ENCODE measurements at regions of chr14 and their contacts with region 1.

Region 1: DNA sequence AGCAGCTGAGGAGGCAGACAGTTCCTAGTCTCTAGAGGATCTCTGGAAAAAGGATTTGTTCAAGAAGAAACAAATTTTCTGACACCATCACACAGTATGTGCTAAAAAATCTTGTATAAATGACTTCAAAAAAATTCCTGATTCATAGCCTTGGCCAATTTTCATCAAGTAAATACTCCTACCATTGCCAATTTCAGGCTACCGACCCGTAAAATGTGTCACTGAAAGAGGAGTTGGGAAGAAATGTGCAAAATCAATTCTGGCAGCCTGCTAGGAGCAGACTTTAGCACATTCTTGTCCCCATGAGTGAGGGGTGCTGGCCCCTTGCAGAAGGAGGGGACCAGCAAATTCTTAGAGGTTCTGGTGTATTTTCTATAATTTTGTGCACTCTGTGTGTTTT is 109.4 kb downstream of the TMEM30B start:
- DNase-seq: no peak
- ATAC-seq: no peak
- H3K4me3 ChIP-seq: no peak overlapping the region
- H3K27ac ChIP-seq: peak overlapping the region in 1 of 2 donors; percentile 57
- H3K4me1 ChIP-seq: peaks cover 0 to 3% of the 10 kb centered on the region in 2 donors
- H3K27me3 ChIP-seq: no peaks in the 10 kb centered on the region

Region 2: GRCh38 chr14:60980811-60981632 is 190.7 kb before region 1 on chr14 and contains the starts of genes SLC38A6 and TRMT5:
- intact Hi-C with region 1: no loop called
- DNase-seq: peak; percentile 95 to 98
- ATAC-seq: peak; percentile 97
- H3K4me3 ChIP-seq: peak within 1 kb of the TSS; percentile 70 to 75
- H3K27ac ChIP-seq: peak within 1 kb of the TSS in 1 of 2 donors; percentile 72
- H3K4me1 ChIP-seq: peaks cover 1 to 5% of the 10 kb centered on the region in 2 donors
- H3K27me3 ChIP-seq: no peaks in the 10 kb centered on the region
- total RNA-seq, gene SLC38A6: 17.2 to 41.3 TPM
- total RNA-seq, gene TRMT5: 8.8 to 12.3 TPM

Region 3: GRCh38 chr14:61153431-61153830 is 18.3 kb before region 1 on chr14:
- intact Hi-C with region 1: loop called in 1 of 2 experiments (anchors 2 kb)
- DNase-seq: no peak
- ATAC-seq: no peak
- H3K4me3 ChIP-seq: no peak overlapping the region
- H3K27ac ChIP-seq: no peak overlapping the region
- H3K4me1 ChIP-seq: no peaks in the 10 kb centered on the region
- H3K27me3 ChIP-seq: no peaks in the 10 kb centered on the region